MCF 10A (cell line): ENCODE measurements at regions of chr17 and their contacts with region 1.

Region 1: GRCh38 chr17:35265566-35266141 is 22.8 kb downstream of the SLFN5 start:
- DNase-seq: no peak
- H3K4me3 Mint-ChIP-seq: no peak overlapping the region
- H3K27ac Mint-ChIP-seq: no peak overlapping the region
- H3K4me1 Mint-ChIP-seq: no peaks in the 10 kb centered on the region
- H3K27me3 Mint-ChIP-seq: no peaks in the 10 kb centered on the region
- CTCF ChIP-seq: no peak

Region 2: GRCh38 chr17:35218915-35219314 is 46.7 kb before region 1 on chr17:
- CTCF ChIA-PET with region 1: no interaction called
- POLR2A ChIA-PET with region 1: no interaction called
- intact Hi-C with region 1: no loop called
- DNase-seq: no peak
- H3K4me3 Mint-ChIP-seq: no peak overlapping the region
- H3K27ac Mint-ChIP-seq: no peak overlapping the region
- H3K4me1 Mint-ChIP-seq: no peaks in the 10 kb centered on the region
- H3K27me3 Mint-ChIP-seq: peaks cover 16% of the 10 kb centered on the region
- CTCF ChIP-seq: no peak

Region 3: DNA sequence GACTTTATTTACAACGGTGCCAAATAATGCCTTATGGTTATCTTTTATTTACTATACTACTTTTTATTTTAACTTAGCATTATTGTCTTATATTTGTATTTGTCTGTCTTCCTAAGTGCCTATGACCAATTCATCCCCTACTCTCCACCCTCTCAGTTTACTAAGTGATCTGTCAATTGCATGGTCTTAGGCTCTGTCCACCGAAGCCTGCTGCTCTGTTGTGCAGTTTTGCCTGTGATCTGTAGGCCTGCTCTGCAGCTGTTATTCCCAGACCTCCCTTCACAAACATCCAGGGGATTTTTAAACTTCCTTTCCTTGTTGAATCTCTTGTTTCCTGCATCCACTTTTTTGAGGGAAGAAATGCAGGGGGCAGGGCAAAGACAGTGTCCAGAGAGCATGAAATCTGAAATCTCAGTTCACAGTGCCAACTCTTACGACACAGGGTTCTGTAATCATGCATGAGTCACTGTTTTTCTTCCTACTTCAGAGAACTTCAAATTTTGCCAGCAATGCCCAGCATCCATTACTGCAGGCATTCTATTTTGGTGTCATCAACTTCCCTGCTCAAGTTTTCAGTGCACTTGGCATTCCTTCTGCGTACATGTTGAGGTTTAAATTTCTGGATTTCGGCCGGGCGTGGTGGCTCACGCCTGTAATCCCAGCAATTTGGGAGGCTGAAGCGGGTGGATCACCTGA is 11.4 kb before region 1 on chr17:
- CTCF ChIA-PET with region 1: no interaction called
- POLR2A ChIA-PET with region 1: interaction called, 11 read pairs
- intact Hi-C with region 1: no loop called
- DNase-seq: peak; percentile 98
- H3K4me3 Mint-ChIP-seq: peak overlapping the region; percentile 36
- H3K27ac Mint-ChIP-seq: peak overlapping the region; percentile 63
- H3K4me1 Mint-ChIP-seq: peaks cover 30% of the 10 kb centered on the region
- H3K27me3 Mint-ChIP-seq: peaks cover 7% of the 10 kb centered on the region
- CTCF ChIP-seq: no peak